Calu3 (cell line): ENCODE measurements at regions of chr3 and their contacts with region 1.

Region 1: GRCh38 chr3:172061724-172062184 is 22.4 kb downstream of the FNDC3B start:
- DNase-seq: no peak
- H3K4me3 Mint-ChIP-seq: peak overlapping the region; percentile 39
- H3K27ac Mint-ChIP-seq: peak overlapping the region; percentile 51
- H3K4me1 Mint-ChIP-seq: peaks cover 87% of the 10 kb centered on the region
- H3K27me3 Mint-ChIP-seq: no peaks in the 10 kb centered on the region
- CTCF ChIP-seq: no peak

Region 2: DNA sequence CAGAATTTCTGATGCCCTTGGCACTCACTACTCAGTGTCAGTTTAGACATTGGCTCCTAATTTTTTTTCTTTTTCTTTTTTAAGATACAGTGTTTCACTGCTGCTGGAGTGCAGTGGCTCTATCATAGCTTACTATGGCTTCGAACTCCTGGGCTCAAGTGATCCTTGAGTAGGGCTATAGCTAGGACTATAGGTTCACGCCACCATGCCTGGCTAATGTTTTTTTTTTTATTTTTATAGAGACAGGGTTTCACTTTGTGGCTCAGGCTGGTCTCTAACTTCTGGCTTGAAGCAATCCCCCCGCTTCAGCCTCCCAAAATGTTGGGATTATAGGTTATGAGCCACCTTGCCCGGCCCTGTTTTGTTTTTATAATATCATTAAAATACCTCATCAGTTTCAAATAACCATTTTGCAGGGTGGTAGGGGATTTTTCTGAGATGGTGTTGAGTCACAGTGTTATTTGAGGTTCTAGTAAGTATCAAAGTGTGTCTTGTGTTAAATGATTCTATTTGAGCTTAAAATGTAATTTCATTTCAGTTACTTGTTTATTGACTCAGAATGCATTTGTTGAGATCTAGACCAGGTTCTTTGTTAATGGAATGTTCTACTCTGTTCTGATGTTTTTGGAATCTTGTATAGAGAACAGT is 15.4 kb before region 1 on chr3:
- CTCF ChIA-PET with region 1: interaction called, 5 read pairs
- intact Hi-C with region 1: loop called (anchors 2 kb)
- DNase-seq: no peak
- H3K4me3 Mint-ChIP-seq: peak overlapping the region; percentile 91
- H3K27ac Mint-ChIP-seq: peak overlapping the region; percentile 45
- H3K4me1 Mint-ChIP-seq: peaks cover 60% of the 10 kb centered on the region
- H3K27me3 Mint-ChIP-seq: no peaks in the 10 kb centered on the region
- CTCF ChIP-seq: no peak

Region 3: DNA sequence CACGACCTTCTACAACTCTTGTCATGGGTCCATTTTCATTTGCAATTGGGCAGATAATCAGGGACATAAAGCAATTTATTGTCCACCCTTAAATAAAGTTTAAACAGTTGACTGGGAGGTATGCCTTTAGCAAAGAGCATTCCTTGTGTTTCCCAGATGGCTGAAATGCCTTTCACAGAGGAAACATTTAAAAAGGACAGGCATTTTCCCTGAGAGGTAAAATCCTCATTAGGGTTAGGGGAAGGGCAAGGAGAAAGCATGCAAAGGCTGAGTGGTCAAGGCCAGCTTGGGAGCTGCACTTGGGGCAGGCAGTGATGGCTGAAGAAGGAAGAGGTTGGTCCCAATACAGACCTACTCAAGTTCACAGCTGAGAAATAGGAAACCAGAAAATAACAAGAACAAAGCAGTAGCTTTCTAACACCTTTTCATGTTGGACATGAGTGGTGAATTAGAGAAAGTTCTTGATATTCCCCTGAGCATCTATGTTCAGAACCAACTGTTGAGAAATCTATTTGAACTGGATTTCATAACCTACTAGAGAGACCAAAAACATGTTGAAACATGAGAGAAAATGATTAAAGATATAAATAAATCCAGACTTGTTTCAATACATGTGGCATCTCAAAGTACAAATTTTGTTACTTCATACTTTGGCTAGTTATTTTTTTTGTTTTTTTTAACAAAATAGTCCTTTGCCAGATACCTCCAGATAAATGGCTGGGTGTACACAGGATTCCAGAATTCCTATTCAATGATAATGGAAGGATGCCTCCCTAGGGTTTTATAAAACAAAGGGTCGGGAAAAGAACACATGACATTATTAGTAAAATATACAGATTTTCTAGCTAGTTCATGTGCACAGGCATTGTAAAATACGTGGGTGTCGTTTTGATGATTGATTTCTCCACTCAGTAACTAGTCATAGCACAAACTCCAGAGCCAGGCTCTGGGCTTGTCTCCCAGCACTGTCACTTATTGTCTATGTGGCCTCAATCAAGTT is 495.8 kb after region 1 on chr3:
- CTCF ChIA-PET with region 1: no interaction called
- intact Hi-C with region 1: no loop called
- DNase-seq: no peak
- H3K4me3 Mint-ChIP-seq: no peak overlapping the region
- H3K27ac Mint-ChIP-seq: no peak overlapping the region
- H3K4me1 Mint-ChIP-seq: peaks cover 52% of the 10 kb centered on the region
- H3K27me3 Mint-ChIP-seq: no peaks in the 10 kb centered on the region
- CTCF ChIP-seq: no peak